Activated T-helper 1 cell treated with anti-CD3 and anti-CD28 coated beads, Interleukin-12 subunit alpha, Interleukin-12 subunit beta, Interleukin-2, Interleukin-4 antibody, amounts not matched to agents 30 ng/mL and 10 ng/mL and 1 ng/mL, durations not matched to agents 14 hours and 24 hours and 36 hours (primary cell): ENCODE measurements at regions of chr19 and their contacts with region 1.

Region 1: GRCh38 chr19:8389891-8390616 is at the start of gene RAB11B:
- DNase-seq: peak; percentile 99
- H3K4me3 Mint-ChIP-seq: peak within 1 kb of the TSS; percentile 91
- H3K27ac Mint-ChIP-seq: peak within 1 kb of the TSS; percentile 94
- H3K4me1 Mint-ChIP-seq: no peaks in the 10 kb centered on the region
- H3K27me3 Mint-ChIP-seq: no peaks in the 10 kb centered on the region
- total RNA-seq, gene RAB11B: 75.1 and 81.0 TPM in 2 replicates

Region 2: DNA sequence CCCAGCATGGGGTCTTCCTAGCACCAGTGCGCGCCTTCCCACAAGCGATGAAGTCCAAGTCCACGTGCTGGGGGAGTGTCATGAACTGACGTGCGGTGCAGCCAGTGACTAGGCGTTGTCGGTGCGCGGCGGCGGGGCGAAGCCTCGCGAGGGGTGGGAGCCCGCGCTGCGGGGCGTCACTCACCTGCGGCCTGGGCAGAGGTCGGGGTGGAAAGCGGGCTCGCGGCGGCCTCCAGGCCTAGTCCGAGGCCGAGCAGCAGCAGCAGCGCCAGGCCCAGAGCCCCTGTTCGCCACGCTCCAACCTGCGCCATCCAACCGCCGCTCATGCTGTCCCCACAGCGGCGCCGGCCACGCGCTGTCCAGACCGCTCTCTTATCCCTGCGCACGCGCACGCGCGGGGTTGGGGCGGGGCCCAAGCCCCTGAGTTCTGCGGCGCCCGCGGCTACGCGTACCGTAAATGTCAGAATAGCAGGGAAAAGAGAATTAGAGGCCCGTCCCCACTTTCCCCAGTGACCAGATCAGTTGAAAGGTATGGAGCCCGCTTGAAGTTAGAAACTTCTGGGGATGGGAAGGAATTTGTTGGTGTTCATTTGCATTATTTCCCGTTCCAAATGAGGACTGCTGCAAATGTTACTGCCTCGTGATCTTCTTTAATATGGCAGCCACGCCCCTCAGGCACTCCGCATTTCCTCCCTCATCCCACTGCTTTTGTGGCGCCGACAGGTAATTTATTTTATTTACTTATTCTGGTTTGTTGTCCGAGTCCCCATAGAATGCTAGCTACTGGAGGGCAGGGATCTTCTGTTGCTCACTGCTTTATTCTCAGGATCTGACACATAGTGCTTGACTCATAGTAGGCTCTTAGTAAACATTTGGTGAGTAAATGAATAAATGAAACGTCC is 81.8 kb before region 1 on chr19 and contains the start of gene CD320:
- intact Hi-C with region 1: loop called (anchors 1 kb)
- DNase-seq: peak; percentile 84
- H3K4me3 Mint-ChIP-seq: peak within 1 kb of the TSS; percentile 89
- H3K27ac Mint-ChIP-seq: peak within 1 kb of the TSS; percentile 81
- H3K4me1 Mint-ChIP-seq: peaks cover 31% of the 10 kb centered on the region
- H3K27me3 Mint-ChIP-seq: no peaks in the 10 kb centered on the region
- total RNA-seq, gene CD320: 122 and 126 TPM in 2 replicates

Region 3: GRCh38 chr19:8342684-8343482 is 47.2 kb before region 1 on chr19 and contains the start of gene KANK3:
- intact Hi-C with region 1: loop called (anchors 1 kb)
- DNase-seq: peak; percentile 86
- H3K4me3 Mint-ChIP-seq: peak within 1 kb of the TSS; percentile 79
- H3K27ac Mint-ChIP-seq: no peak within 1 kb of the TSS
- H3K4me1 Mint-ChIP-seq: peaks cover 5% of the 10 kb centered on the region
- H3K27me3 Mint-ChIP-seq: peaks cover 39% of the 10 kb centered on the region
- total RNA-seq, gene KANK3: 0.86 and 1.4 TPM in 2 replicates

Region 4: GRCh38 chr19:8363803-8364771 is 26.0 kb before region 1 on chr19 and contains the start of gene ANGPTL4:
- intact Hi-C with region 1: loop called (anchors 1 kb)
- DNase-seq: peak; percentile 59
- H3K4me3 Mint-ChIP-seq: peak within 1 kb of the TSS; percentile 86
- H3K27ac Mint-ChIP-seq: peak within 1 kb of the TSS; percentile 86
- H3K4me1 Mint-ChIP-seq: peaks cover 16% of the 10 kb centered on the region
- H3K27me3 Mint-ChIP-seq: peaks cover 30% of the 10 kb centered on the region
- total RNA-seq, gene ANGPTL4: 2.3 and 3.8 TPM in 2 replicates

Region 5: DNA sequence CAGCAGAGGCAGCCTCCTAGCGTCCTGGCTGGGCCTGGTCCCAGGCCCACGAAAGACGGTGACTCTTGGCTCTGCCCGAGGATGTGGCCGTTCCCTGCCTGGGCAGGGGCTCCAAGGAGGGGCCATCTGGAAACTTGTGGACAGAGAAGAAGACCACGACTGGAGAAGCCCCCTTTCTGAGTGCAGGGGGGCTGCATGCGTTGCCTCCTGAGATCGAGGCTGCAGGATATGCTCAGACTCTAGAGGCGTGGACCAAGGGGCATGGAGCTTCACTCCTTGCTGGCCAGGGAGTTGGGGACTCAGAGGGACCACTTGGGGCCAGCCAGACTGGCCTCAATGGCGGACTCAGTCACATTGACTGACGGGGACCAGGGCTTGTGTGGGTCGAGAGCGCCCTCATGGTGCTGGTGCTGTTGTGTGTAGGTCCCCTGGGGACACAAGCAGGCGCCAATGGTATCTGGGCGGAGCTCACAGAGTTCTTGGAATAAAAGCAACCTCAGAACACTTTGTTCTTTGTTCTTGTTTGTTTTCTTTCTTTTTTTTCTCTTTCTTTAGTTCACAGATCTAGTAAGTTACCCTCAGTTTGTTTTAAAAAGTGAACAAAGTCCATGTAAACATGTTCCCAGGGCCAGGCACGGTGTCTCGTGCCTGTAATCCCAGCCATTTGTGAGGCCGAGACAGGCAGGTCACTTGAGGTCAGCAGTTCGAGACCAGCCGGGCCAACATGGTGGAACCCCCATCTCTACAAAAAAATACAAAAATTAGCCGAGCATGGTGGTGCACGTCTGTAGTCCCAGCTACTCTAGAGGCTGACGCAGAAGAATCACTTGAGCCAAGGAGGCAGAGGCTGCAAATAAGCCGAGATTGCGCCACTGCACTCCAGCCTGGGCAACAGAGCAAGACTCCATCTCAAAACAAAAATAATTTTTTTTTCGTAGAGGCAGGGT is 15.9 kb before region 1 on chr19:
- intact Hi-C with region 1: no loop called
- DNase-seq: no peak
- H3K4me3 Mint-ChIP-seq: no peak overlapping the region
- H3K27ac Mint-ChIP-seq: no peak overlapping the region
- H3K4me1 Mint-ChIP-seq: peaks cover 12% of the 10 kb centered on the region
- H3K27me3 Mint-ChIP-seq: no peaks in the 10 kb centered on the region

Region 6: GRCh38 chr19:8423817-8424223 is 33.8 kb after region 1 on chr19:
- intact Hi-C with region 1: no loop called
- DNase-seq: no peak
- H3K4me3 Mint-ChIP-seq: no peak overlapping the region
- H3K27ac Mint-ChIP-seq: no peak overlapping the region
- H3K4me1 Mint-ChIP-seq: no peaks in the 10 kb centered on the region
- H3K27me3 Mint-ChIP-seq: no peaks in the 10 kb centered on the region

Region 7: GRCh38 chr19:8444645-8445487 is 54.8 kb after region 1 on chr19 and contains the start of gene HNRNPM:
- intact Hi-C with region 1: loop called (anchors 1 kb)
- DNase-seq: peak; percentile 100
- H3K4me3 Mint-ChIP-seq: peak within 1 kb of the TSS; percentile 95
- H3K27ac Mint-ChIP-seq: peak within 1 kb of the TSS; percentile 98
- H3K4me1 Mint-ChIP-seq: peaks cover 40% of the 10 kb centered on the region
- H3K27me3 Mint-ChIP-seq: peaks cover 1% of the 10 kb centered on the region
- total RNA-seq, gene HNRNPM: 323 and 331 TPM in 2 replicates

Region 8: DNA sequence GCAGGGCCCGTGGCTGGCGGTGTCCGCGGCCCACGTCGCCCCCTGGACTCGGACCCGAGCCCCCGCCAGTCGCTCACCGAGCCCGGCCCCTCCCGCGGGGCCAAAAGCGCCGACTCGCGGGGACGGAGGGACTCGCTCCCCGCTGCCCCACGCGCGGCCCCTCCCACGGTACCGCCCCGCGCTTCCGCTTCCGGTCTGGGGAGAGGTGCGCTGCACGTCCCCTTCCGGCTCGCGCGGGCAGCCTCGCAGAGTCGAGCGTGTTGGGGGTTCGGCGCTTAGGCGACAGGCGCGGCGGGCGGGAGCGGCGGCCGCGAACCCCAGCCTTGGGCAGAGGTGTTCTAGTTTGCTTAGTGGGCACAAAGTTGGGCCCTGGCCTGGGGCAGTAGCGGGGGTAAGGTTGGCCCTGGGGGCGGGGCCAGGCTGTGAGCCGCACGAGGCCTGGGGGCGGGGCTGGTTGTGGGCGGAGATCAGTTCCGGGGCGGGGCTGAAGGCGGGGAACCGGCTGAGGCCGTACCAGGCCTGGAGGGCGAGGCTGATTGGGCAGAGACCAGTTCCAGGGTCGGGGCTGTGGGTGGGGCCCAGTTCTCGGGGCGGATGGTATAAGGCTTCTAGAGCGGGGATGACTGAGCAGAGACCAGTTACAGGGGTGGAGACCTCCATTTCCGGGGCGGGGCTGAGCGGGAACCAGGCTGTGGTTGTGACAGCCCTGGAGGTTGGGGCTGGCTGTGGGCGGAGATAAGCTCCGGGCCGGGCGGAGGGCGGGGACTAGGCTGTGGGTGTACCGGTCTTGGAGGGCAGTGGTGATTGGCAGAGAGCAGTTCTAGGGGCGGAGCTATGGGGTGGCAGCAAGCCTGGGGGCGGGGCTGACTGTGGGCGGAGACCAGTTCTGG is 442.3 kb after region 1 on chr19 and contains the starts of genes MBD3L1 and ZNF558:
- intact Hi-C with region 1: loop called (anchors 5 kb)
- DNase-seq: peak; percentile 98
- H3K4me3 Mint-ChIP-seq: peak within 1 kb of the TSS; percentile 84
- H3K27ac Mint-ChIP-seq: peak within 1 kb of the TSS; percentile 95
- H3K4me1 Mint-ChIP-seq: peaks cover 20% of the 10 kb centered on the region
- H3K27me3 Mint-ChIP-seq: no peaks in the 10 kb centered on the region
- total RNA-seq, gene MBD3L1: not detected in 2 replicates
- total RNA-seq, gene ZNF558: 18.7 and 23.2 TPM in 2 replicates